Ovary (tissue), 10 donors: ENCODE measurements at regions of chr12 and their contacts with region 1.

Region 1: DNA sequence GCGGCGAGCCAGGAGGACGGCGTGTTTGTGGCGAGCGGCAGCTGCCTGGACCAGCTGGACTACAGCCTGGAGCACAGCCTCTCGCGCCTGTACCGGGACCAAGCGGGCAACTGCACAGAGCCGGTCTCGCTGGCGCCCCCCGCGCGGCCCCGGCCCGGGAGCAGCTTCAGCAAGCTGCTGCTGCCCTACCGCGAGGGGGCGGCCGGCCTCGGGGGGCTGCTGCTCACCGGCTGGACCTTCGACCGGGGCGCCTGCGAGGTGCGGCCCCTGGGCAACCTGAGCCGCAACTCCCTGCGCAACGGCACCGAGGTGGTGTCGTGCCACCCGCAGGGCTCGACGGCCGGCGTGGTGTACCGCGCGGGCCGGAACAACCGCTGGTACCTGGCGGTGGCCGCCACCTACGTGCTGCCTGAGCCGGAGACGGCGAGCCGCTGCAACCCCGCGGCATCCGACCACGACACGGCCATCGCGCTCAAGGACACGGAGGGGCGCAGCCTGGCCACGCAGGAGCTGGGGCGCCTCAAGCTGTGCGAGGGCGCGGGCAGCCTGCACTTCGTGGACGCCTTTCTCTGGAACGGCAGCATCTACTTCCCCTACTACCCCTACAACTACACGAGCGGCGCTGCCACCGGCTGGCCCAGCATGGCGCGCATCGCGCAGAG is 873 bp downstream of the PLXNC1 start:
- DNase-seq: peak; percentile 52 to 75 (median 69)
- H3K4me3 ChIP-seq: peak overlapping the region; percentile 60
- H3K27ac ChIP-seq: peak overlapping the region in 1 of 2 donors; percentile 72
- H3K4me1 ChIP-seq: peaks cover 1% of the 10 kb centered on the region
- H3K27me3 ChIP-seq: no peaks in the 10 kb centered on the region
- CTCF ChIP-seq: peak in 1 of 3 donors; percentile 54
- EP300 ChIP-seq: no peak
- POLR2A ChIP-seq: no peak

Region 2: DNA sequence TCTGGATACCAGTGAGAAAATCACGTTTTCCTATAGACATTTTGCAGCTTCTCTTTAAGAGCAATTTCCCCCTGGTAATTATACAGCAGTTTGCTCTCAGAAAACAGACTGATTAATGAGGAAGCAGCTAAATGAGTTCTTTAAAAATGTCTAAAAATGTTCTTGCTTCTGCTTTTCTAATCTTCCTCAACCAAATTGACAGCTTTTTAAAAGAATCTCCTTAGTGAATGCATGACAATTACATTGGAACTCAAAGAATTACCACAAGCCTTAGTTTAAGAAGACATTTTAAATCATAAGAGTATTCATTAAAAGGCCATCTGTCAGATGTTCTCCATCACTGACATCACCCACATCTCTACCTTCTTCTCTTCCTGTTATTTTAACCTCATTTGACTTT is 136.7 kb before region 1 on chr12:
- intact Hi-C with region 1: no loop called
- DNase-seq: no peak
- H3K4me3 ChIP-seq: no peak overlapping the region
- H3K27ac ChIP-seq: no peak overlapping the region
- H3K4me1 ChIP-seq: no peaks in the 10 kb centered on the region
- H3K27me3 ChIP-seq: no peaks in the 10 kb centered on the region
- CTCF ChIP-seq: no peak
- EP300 ChIP-seq: no peak
- POLR2A ChIP-seq: no peak

Region 3: GRCh38 chr12:94207849-94208621 is 58.8 kb after region 1 on chr12:
- intact Hi-C with region 1: loop called in 1 of 4 experiments (anchors 10 kb)
- DNase-seq: peak in 2 of 5 donors; percentile 18 to 37
- H3K4me3 ChIP-seq: no peak overlapping the region
- H3K27ac ChIP-seq: peak overlapping the region; percentile 49 to 73
- H3K4me1 ChIP-seq: peaks cover 20% of the 10 kb centered on the region
- H3K27me3 ChIP-seq: no peaks in the 10 kb centered on the region
- CTCF ChIP-seq: no peak
- EP300 ChIP-seq: no peak
- POLR2A ChIP-seq: no peak

Region 4: GRCh38 chr12:94435511-94435927 is 286.3 kb after region 1 on chr12:
- intact Hi-C with region 1: loop called in 3 of 4 experiments (anchors 2 to 10 kb)
- DNase-seq: no peak
- H3K4me3 ChIP-seq: no peak overlapping the region
- H3K27ac ChIP-seq: no peak overlapping the region
- H3K4me1 ChIP-seq: peaks cover 2% of the 10 kb centered on the region
- H3K27me3 ChIP-seq: no peaks in the 10 kb centered on the region
- CTCF ChIP-seq: no peak
- EP300 ChIP-seq: no peak
- POLR2A ChIP-seq: no peak

Region 5: GRCh38 chr12:94753036-94753679 is 603.9 kb after region 1 on chr12:
- intact Hi-C with region 1: loop called in 1 of 4 experiments (anchors 10 kb)
- DNase-seq: peak in 3 of 5 donors; percentile 30 to 42 (median 40)
- H3K4me3 ChIP-seq: no peak overlapping the region
- H3K27ac ChIP-seq: no peak overlapping the region
- H3K4me1 ChIP-seq: peaks cover 10% of the 10 kb centered on the region
- H3K27me3 ChIP-seq: no peaks in the 10 kb centered on the region
- CTCF ChIP-seq: no peak
- EP300 ChIP-seq: no peak
- POLR2A ChIP-seq: no peak